ENCODE measurements at regions of chr10 and their contacts with region 1.

Region 1: GRCh38 chr10:58943256-58943890 is 233.1 kb upstream of the PHYHIPL start:
- DNase-seq: peak; percentile 63
- H3K4me3 ChIP-seq: no peak overlapping the region
- H3K27ac ChIP-seq: no peak overlapping the region
- H3K4me1 ChIP-seq: peaks cover 20% of the 10 kb centered on the region
- H3K27me3 ChIP-seq: no peaks in the 10 kb centered on the region

Region 2: GRCh38 chr10:58177362-58177947 is 765.9 kb before region 1 on chr10:
- in situ Hi-C with region 1: loop called (anchors 25 kb)
- DNase-seq: peak; percentile 67
- H3K4me3 ChIP-seq: no peak overlapping the region
- H3K27ac ChIP-seq: no peak overlapping the region
- H3K4me1 ChIP-seq: no peaks in the 10 kb centered on the region
- H3K27me3 ChIP-seq: 0 out of 2 replicates have a peak, but pooled peaks cover 3% of the 10 kb centered on the region

Region 3: GRCh38 chr10:58543141-58543540 is 400.2 kb before region 1 on chr10:
- in situ Hi-C with region 1: loop called (anchors 10 kb)
- DNase-seq: no peak
- H3K4me3 ChIP-seq: no peak overlapping the region
- H3K27ac ChIP-seq: no peak overlapping the region
- H3K4me1 ChIP-seq: peaks cover 28% of the 10 kb centered on the region
- H3K27me3 ChIP-seq: no peaks in the 10 kb centered on the region

Region 4: DNA sequence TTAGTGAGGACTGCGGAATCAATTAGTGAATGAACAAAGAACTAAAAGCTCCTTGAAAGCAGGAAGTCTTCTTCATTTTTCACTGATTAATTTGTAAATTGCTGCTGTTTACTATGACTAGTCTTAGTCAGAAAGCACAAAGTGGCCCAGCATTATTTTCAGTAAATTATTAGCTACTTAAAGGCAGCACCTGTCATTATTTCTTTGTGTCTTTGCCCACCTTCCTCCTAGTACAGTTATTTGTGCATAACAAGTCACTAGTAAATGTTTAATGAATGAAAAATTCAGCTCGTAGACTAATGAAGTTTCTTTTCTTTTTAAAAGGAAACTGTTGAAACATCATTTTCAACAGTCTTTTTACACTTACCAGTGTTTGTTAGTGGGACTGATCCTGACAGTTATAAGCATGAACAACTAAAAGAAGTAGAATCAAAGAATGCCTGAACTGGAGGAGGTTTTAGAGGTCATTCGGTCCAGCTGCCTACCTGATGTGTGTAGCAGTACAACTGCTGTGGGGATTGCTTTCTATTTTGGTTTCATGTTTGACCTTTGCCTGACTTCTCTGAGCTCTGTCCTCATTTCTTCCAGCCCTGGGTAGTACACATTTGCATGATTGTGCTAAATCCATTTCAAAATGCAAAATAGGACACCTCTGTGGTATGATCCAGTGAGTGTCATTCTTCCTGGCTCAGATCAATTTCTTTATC is 93.1 kb after region 1 on chr10:
- in situ Hi-C with region 1: no loop called
- DNase-seq: no peak
- H3K4me3 ChIP-seq: no peak overlapping the region
- H3K27ac ChIP-seq: no peak overlapping the region
- H3K4me1 ChIP-seq: no peaks in the 10 kb centered on the region
- H3K27me3 ChIP-seq: no peaks in the 10 kb centered on the region